Panc1 (cell line): ENCODE measurements at regions of chrX and their contacts with region 1.

Region 1: GRCh38 chrX:107894038-107894437 is 68.4 kb downstream of the MID2 start:
- DNase-seq: peak; percentile 25
- ATAC-seq: peak; percentile 94
- H3K4me3 ChIP-seq: no peak overlapping the region
- H3K27ac ChIP-seq: no peak overlapping the region
- H3K4me1 ChIP-seq: no peaks in the 10 kb centered on the region
- H3K27me3 ChIP-seq: no peaks in the 10 kb centered on the region
- CTCF ChIP-seq: peak; percentile 62

Region 2: DNA sequence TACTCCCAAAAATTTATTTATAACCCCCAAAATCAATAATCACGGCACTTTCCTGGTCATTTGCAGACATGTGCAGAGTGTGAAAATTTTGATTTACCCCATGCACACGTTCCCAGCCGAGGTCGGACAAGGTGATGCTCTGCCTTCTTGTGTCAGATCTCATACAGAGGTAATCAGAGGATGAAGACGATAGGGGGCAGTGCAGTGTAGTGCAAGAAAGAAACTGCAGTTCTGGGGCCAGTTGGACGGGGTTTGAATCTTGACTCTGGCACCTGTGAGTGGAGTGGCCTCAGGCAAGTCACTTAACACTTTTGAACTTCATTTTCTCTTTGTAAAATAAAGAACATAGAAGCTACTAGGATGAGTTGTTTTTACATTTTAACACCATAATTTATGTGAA is 356.2 kb before region 1 on chrX:
- CTCF ChIA-PET with region 1: no interaction called
- POLR2A ChIA-PET with region 1: no interaction called
- in situ Hi-C with region 1: no loop called
- intact Hi-C with region 1: loop called (anchors 10 kb)
- DNase-seq: peak; percentile 41
- ATAC-seq: peak; percentile 89
- H3K4me3 ChIP-seq: no peak overlapping the region
- H3K27ac ChIP-seq: no peak overlapping the region
- H3K4me1 ChIP-seq: no peaks in the 10 kb centered on the region
- H3K27me3 ChIP-seq: no peaks in the 10 kb centered on the region
- CTCF ChIP-seq: peak; percentile 81

Region 3: DNA sequence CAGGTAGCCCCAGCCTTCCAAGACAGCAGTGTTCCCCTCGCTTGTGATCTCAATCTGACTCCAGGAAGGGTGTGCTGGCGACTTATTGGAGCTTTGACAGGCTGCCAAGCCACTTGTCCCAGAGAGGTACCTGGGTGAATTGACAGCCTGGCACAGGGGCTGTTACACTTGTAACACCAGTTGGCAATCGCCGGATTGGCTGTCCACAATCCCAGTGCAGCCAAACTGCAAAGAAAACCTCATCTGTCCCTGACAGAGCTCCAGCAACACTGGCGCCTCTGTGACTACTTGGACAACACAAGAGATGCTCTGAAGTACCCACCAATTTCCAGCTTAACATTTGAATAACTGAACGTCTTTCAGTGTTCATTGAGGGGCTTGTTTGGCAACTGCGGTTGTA is 342.5 kb before region 1 on chrX:
- CTCF ChIA-PET with region 1: no interaction called
- POLR2A ChIA-PET with region 1: no interaction called
- in situ Hi-C with region 1: no loop called
- intact Hi-C with region 1: no loop called
- DNase-seq: no peak
- ATAC-seq: no peak
- H3K4me3 ChIP-seq: no peak overlapping the region
- H3K27ac ChIP-seq: no peak overlapping the region
- H3K4me1 ChIP-seq: no peaks in the 10 kb centered on the region
- H3K27me3 ChIP-seq: no peaks in the 10 kb centered on the region
- CTCF ChIP-seq: no peak

Region 4: DNA sequence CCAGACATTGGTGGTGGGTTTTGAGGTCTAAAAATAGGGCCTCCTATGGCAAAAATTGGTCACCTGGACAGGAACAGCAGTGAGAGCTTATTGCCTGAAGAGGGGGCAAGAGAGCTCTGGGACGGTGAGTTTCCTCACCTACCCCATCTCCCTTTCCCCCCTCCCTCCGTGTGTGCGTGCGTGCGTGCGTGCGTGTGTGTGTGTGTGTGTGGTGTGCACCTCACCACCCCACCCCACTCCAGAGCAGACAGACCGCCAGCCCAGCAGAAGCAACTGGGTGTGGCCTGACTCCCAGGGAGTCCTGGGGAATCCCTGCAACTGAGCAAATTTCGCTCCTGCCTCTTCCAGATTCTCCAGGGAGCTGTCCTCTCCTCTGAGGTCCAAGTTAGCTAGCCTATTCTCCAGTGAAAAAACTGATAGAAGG is 221.1 kb before region 1 on chrX:
- CTCF ChIA-PET with region 1: no interaction called
- POLR2A ChIA-PET with region 1: no interaction called
- in situ Hi-C with region 1: no loop called
- intact Hi-C with region 1: loop called (anchors 5 kb)
- DNase-seq: no peak
- ATAC-seq: 0 out of 2 replicates have a peak, but pooled peaks have one; percentile 31
- H3K4me3 ChIP-seq: no peak overlapping the region
- H3K27ac ChIP-seq: no peak overlapping the region
- H3K4me1 ChIP-seq: peaks cover 25% of the 10 kb centered on the region
- H3K27me3 ChIP-seq: no peaks in the 10 kb centered on the region
- CTCF ChIP-seq: peak; percentile 89

Region 5: GRCh38 chrX:107787827-107788226 is 106.2 kb before region 1 on chrX:
- CTCF ChIA-PET with region 1: no interaction called
- POLR2A ChIA-PET with region 1: no interaction called
- in situ Hi-C with region 1: no loop called
- intact Hi-C with region 1: loop called (anchors 5 kb)
- DNase-seq: no peak
- ATAC-seq: no peak
- H3K4me3 ChIP-seq: no peak overlapping the region
- H3K27ac ChIP-seq: no peak overlapping the region
- H3K4me1 ChIP-seq: no peaks in the 10 kb centered on the region
- H3K27me3 ChIP-seq: peaks cover 6% of the 10 kb centered on the region; the same call in 1 of the 2 replicates
- CTCF ChIP-seq: no peak

Region 6: DNA sequence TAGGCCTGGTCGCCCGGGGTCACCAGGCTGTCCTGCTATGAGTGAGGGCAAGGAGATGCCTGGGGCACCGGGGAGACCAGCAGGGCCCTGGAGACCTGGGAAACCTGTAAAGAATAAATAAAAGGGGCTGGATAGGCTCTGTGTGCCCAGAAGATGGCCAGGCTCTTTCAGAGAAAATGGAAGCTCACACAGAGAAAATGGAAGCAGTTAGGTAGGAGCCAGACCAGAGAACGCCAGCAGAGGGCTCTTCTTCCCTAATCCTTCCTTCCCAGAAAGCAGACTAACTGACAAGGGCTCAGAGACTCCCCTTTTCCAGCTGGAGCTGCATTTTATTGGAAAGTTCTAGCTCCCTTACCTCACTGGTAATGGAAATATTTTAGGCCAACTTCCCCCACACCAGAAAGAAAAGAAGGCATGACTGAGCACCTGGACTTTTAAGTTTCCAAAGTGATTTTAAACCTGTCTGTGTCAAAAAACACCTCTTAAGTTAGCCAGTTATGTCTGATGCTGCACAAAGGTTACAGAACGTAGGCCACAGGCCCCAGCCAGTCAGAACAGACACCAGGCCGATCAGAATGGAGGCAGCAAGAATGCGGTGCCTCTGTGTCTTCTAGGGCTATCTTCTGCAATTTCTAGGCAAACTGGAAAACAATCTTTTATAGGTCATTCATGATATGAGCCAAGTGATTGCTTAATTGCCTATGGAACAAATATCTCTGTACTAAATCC is 271.5 kb after region 1 on chrX:
- CTCF ChIA-PET with region 1: no interaction called
- POLR2A ChIA-PET with region 1: no interaction called
- in situ Hi-C with region 1: no loop called
- intact Hi-C with region 1: no loop called
- DNase-seq: peak; percentile 10
- ATAC-seq: peak; percentile 92
- H3K4me3 ChIP-seq: no peak overlapping the region
- H3K27ac ChIP-seq: no peak overlapping the region
- H3K4me1 ChIP-seq: no peaks in the 10 kb centered on the region; the same call in 1 of the 2 replicates
- H3K27me3 ChIP-seq: no peaks in the 10 kb centered on the region
- CTCF ChIP-seq: peak; percentile 74